Mucosa of descending colon (tissue), 3 donors: ENCODE measurements at regions of chr19 and their contacts with region 1.

Region 1: DNA sequence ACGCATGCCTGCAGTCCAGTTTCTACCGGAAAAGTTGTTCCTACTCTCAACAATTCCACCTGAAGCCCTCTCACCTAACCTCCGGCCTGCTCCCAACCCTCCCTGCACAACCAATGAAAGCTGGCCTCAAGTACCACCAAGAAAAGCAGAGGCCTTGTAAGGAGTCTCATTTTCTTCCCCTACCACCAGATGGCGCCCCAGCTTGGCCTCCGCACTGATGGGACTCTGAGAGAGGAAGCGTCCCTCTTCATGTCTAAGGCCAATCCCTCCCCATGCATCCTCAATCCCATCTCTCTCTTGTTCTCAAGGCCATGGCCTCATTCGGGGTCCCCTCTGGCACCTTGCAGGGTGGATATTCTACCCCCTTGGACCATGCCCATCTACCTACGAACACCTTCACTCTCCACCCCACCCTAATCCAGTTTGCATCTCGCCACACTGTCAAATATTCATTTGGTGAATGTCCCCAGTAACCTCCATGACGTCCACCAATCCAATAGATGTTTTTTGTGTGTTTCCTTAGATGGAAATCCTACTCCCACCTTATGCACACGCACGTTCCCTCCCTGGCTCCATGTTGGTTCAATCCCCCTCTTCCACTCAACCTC is 412.8 kb downstream of the ZNF536 start:
- DNase-seq: peak in 2 of 3 donors; percentile 68 to 70
- ATAC-seq: peak; percentile 67
- H3K4me3 ChIP-seq: no peak overlapping the region
- H3K4me1 ChIP-seq: no peaks in the 10 kb centered on the region
- CTCF ChIP-seq: peak; percentile 30

Region 2: GRCh38 chr19:31350701-31351068 is 565.7 kb after region 1 on chr19:
- intact Hi-C with region 1: loop called in 1 of 2 experiments (anchors 10 kb)
- DNase-seq: peak in 2 of 3 donors; percentile 61 to 69
- ATAC-seq: peak; percentile 52
- H3K4me3 ChIP-seq: peak overlapping the region; percentile 32
- H3K4me1 ChIP-seq: peaks cover 20% of the 10 kb centered on the region
- CTCF ChIP-seq: no peak

Region 3: GRCh38 chr19:32238076-32238475 is 1453.1 kb after region 1 on chr19:
- intact Hi-C with region 1: loop called in 1 of 2 experiments (anchors 10 kb)
- DNase-seq: no peak
- ATAC-seq: no peak
- H3K4me3 ChIP-seq: no peak overlapping the region
- H3K4me1 ChIP-seq: no peaks in the 10 kb centered on the region
- CTCF ChIP-seq: no peak